ENCODE measurements at regions of chr2 and their contacts with region 1.

Region 1: GRCh38 chr2:143217512-143218115 is 88.4 kb downstream of the ARHGAP15 start:
- DNase-seq: no peak
- H3K4me3 Mint-ChIP-seq: no peak overlapping the region
- H3K27ac Mint-ChIP-seq: peak overlapping the region; percentile 79
- H3K4me1 Mint-ChIP-seq: peaks cover 40% of the 10 kb centered on the region
- H3K27me3 Mint-ChIP-seq: no peaks in the 10 kb centered on the region

Region 2: GRCh38 chr2:143034292-143035074 is 183.1 kb before region 1 on chr2:
- intact Hi-C with region 1: loop called (anchors 1 kb)
- DNase-seq: peak; percentile 88
- H3K4me3 Mint-ChIP-seq: no peak overlapping the region
- H3K27ac Mint-ChIP-seq: no peak overlapping the region
- H3K4me1 Mint-ChIP-seq: peaks cover 11% of the 10 kb centered on the region
- H3K27me3 Mint-ChIP-seq: peaks cover 3% of the 10 kb centered on the region

Region 3: DNA sequence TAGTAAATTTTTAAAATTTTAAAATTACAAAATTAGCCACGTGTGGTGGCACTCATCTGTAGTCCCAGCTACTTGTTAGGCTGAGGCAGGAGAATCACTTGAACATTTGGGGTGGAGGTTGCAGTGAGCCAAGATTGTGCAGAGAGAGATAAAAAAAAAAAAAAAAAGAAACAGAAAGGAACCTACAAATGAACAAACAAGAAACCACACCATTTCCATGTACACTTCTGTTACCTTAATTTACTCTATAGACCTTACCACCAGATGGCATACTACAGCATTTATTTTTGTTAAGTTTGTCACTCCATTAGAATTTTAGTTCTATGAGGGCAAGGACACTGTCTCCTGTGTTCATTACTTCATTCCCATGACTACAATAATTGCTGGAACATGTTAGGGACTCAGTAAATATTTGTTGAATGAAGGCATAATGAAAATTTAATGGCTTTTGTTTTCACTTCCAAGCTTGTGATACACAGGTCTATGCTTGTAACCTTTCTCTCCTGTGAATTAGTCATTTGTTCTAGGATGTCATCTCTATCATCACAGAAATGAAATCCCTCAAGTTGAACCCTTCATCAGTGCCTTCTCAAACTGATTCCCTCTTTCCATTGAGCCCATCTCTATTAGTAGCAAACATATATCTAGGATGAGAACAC is 12.4 kb before region 1 on chr2:
- intact Hi-C with region 1: loop called (anchors 1 kb)
- DNase-seq: peak; percentile 70
- H3K4me3 Mint-ChIP-seq: peak overlapping the region; percentile 9
- H3K27ac Mint-ChIP-seq: peak overlapping the region; percentile 68
- H3K4me1 Mint-ChIP-seq: peaks cover 47% of the 10 kb centered on the region
- H3K27me3 Mint-ChIP-seq: no peaks in the 10 kb centered on the region

Measured in activated CD4-positive, alpha-beta T cell treated with anti-CD3 and anti-CD28 coated beads, Interleukin-2, amount 10 ng/mL, durations not matched to agents 24 days and 14 days (primary cell).